ENCODE measurements at regions of chr1 and their contacts with region 1.

Region 1: DNA sequence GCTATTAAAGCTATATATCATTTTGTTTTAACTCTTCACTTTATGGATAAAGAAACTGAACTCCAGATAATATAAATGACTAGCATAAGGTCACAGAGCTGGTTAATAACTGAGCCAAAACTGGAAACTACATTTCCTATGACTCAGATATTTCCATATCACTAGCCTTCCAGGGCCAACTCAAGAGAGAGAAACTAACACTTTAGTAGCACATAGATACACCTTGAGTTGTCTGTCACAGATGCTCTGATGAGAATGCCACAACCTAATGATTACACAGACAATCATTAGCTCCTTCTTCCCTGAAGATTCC is 40.7 kb downstream of the NME7 start:
- DNase-seq: no peak
- H3K4me3 Mint-ChIP-seq: no peak overlapping the region
- H3K27ac Mint-ChIP-seq: peak overlapping the region; percentile 31
- H3K4me1 Mint-ChIP-seq: peaks cover 13% of the 10 kb centered on the region
- H3K27me3 Mint-ChIP-seq: no peaks in the 10 kb centered on the region

Region 2: DNA sequence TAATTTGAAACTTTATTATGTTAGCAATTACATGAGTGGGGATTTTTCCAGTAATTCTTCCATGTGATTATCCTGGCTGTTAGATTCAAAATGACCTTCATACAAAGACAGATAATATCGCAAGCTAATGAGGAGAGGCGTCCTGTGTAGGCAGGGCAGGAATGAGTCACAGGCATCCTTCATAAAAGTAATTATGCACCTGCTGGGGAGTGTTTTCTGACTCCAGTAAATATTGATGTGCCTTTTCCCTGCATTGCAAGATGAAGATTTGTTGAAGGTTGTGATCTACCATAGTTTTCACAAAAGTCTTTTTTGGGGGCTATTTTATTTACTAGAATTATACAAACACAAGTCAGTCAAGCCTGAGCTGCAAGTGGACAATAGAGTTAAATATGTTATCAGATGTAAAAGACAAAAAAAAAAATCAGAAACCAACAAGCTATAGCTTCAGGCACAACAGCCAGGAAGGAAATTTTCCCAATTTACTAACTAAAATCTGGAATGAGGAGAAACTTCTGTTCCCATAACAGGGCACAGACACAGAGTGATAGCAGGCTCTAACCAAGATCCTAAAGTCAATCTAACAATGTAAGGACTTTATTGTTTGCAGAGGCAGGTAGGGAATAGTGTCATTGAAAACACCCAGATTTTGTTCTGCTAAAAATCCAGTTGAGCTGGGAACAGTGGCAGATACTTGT is 387.2 kb before region 1 on chr1:
- intact Hi-C with region 1: no loop called
- DNase-seq: no peak
- H3K4me3 Mint-ChIP-seq: no peak overlapping the region
- H3K27ac Mint-ChIP-seq: no peak overlapping the region
- H3K4me1 Mint-ChIP-seq: no peaks in the 10 kb centered on the region
- H3K27me3 Mint-ChIP-seq: peaks cover 13% of the 10 kb centered on the region

Region 3: DNA sequence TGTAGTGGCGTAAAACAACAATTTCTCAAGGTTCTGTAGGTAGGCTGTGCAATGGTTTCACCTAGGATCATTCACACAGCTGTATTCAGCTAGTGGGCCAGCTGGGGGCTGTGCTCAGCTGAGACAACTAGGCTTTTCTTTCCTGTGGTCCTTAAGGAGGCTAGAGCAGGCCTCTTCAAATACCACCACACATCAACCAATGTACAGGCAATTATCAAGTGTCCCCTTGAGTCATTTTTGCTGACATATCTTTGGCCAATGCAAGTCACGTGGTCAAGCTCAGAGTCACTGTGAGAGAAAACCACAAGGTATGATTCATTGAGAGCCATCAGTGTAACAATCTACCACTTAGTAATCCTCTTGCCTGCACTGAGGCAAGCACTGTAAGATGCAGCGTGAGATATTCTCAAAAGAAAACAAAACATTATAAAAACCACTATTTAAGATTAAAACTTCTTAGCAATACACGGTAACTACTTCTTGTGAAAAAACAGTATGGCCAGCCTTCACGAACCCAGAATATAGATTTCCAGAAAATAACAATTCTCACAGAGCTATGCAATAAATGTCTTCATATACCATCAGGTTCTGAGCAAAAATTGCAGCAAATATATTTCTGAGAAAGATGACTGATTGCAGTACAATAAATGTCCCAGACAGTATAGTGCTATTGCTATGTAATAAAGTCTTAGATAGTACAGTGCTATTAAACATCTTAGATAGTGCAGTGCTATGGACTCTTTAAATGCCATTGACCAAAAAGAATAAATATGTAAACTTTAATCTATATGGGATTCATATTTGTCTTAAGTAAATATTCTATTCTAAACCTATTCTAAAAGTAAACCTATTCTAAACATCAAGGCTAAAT is 14.6 kb before region 1 on chr1:
- intact Hi-C with region 1: loop called (anchors 2 kb)
- DNase-seq: peak; percentile 31
- H3K4me3 Mint-ChIP-seq: no peak overlapping the region
- H3K27ac Mint-ChIP-seq: peak overlapping the region; percentile 43
- H3K4me1 Mint-ChIP-seq: peaks cover 20% of the 10 kb centered on the region
- H3K27me3 Mint-ChIP-seq: no peaks in the 10 kb centered on the region

Measured in activated T-helper 1 cell treated with anti-CD3 and anti-CD28 coated beads, Interleukin-12 subunit alpha, Interleukin-12 subunit beta, Interleukin-2, Interleukin-4 antibody, amounts not matched to agents 30 ng/mL and 10 ng/mL and 1 ng/mL, durations not matched to agents 14 hours and 24 hours and 36 hours (primary cell).